ENCODE measurements at regions of chr1 and their contacts with region 1.

Region 1: DNA sequence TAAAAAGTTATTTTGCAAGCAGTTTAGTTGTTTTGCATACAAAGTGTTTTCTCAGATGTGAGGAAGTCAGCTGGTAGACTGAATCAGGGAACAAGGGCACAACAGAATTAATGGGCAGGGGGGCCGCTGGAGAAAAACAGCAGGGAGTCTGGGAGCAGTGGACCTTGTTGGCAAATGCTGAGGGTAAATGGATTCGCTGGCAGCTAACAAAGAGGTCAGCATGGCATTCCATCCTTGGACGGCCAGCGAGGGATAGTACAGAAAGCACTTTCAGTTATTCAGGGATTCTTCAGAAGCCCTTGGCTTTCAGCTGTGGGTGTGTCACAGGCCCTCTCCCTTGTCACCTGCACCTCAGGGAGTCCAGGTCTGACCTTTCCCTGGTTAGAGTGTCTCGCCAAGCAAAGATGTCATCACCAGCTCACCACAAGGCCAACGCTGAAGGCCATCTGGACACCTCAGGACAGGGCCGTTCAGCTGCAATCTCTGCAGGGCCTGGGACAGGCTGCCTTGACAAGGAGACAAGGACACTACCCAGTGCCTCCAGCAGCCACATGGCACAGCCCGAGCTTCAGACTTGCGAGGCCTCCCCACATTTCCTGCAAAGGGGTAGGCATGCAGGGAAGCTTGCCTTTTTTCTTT is 90.4 kb downstream of the KCNN3 start:
- DNase-seq: no peak
- ATAC-seq: no peak
- H3K4me3 Mint-ChIP-seq: no peak overlapping the region
- H3K27ac Mint-ChIP-seq: no peak overlapping the region
- H3K4me1 Mint-ChIP-seq: 0 out of 2 replicates have a peak, but pooled peaks cover 4% of the 10 kb centered on the region
- H3K27me3 Mint-ChIP-seq: peaks cover 3% of the 10 kb centered on the region; the same call in 1 of the 2 replicates
- CTCF ChIP-seq: no peak

Region 2: GRCh38 chr1:154703170-154703569 is 76.5 kb before region 1 on chr1:
- CTCF ChIA-PET with region 1: no interaction called
- POLR2A ChIA-PET with region 1: no interaction called
- DNase-seq: no peak
- ATAC-seq: peak; percentile 82
- H3K4me3 Mint-ChIP-seq: no peak overlapping the region
- H3K27ac Mint-ChIP-seq: no peak overlapping the region
- H3K4me1 Mint-ChIP-seq: peaks cover 5% of the 10 kb centered on the region
- H3K27me3 Mint-ChIP-seq: no peaks in the 10 kb centered on the region
- CTCF ChIP-seq: no peak

Region 3: GRCh38 chr1:154837672-154838171 is 58.1 kb after region 1 on chr1:
- CTCF ChIA-PET with region 1: no interaction called
- POLR2A ChIA-PET with region 1: no interaction called
- DNase-seq: no peak
- ATAC-seq: no peak
- H3K4me3 Mint-ChIP-seq: no peak overlapping the region
- H3K27ac Mint-ChIP-seq: no peak overlapping the region
- H3K4me1 Mint-ChIP-seq: peaks cover 19% of the 10 kb centered on the region
- H3K27me3 Mint-ChIP-seq: no peaks in the 10 kb centered on the region
- CTCF ChIP-seq: no peak

Region 4: DNA sequence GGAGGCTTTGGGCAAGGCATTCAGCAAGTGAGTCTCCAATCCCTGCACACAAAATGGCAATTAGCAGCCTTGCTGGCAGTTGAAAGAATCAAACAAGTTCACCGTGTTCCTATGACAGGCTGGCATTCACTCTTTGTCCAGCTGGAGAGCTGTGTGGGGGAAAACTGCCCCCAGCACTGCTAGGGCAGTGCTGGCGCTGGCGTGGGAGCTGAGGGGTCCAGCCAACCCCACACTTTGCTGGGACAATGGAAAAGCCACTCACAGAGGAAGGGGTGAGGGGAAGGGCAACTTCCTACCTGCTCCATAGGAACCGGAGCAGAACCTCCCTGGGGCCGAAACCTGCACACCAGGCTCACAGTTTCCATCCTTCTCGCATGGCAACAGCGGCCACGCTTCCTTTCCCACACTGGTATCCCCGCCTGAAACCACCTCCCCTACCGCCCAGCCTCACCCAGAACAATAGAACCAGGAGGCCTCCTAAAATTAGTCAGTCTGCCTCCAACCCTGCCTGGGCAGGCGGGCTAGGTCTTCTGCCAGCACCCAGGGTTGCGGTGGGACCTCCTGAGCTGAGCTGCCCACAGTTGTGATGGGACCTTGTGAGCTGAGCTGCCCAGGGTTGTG is 117.2 kb after region 1 on chr1:
- CTCF ChIA-PET with region 1: no interaction called
- POLR2A ChIA-PET with region 1: interaction called, 10 read pairs
- DNase-seq: no peak
- ATAC-seq: no peak
- H3K4me3 Mint-ChIP-seq: no peak overlapping the region
- H3K27ac Mint-ChIP-seq: no peak overlapping the region
- H3K4me1 Mint-ChIP-seq: no peaks in the 10 kb centered on the region
- H3K27me3 Mint-ChIP-seq: no peaks in the 10 kb centered on the region; the same call in 1 of the 2 replicates
- CTCF ChIP-seq: no peak